Pancreas (tissue), 10 donors: ENCODE measurements at regions of chr12 and their contacts with region 1.

Region 1: DNA sequence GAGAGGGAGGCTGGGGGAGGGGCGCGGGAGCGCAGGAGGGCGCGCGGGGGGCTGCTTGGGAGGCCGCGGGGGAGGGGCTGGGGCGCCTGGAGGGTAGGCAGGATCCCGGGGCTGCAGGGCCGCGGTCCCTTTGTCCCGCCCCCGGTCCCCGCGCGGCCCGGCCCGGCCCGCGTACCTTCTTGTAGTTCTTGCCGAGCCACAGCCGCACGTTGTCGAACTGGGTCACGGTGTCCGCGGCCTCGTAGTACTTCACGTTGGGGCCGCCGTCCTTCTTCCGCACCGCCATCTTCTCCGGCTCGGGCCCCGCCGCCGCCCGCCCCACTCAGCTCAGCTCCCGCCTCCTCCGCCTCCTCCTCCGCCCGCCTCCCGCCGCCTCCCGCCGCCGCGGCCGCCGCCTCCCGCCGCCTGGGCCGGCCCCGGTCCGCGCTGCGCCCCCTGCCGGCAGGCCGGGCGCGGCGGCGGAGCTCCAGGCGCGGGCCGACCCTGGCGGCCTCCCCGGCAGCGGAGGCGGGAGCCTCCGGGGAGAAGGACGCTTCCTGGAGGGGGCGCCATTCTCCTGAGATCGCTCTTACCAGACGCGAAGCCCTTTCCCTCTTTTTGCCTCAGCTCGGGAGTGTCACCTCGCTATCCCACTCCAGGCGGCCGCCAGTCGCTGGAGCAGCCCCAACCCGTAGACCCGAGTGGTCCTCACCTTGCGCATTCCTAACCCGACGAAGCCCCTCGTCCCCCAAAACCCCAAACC is at the start of gene SMARCC2:
- DNase-seq: peak; percentile 87 to 95 (median 92)
- ATAC-seq: peak; percentile 82 to 93 (median 87)
- H3K4me3 ChIP-seq: peak within 1 kb of the TSS; percentile 69 to 91 (median 78)
- H3K27ac ChIP-seq: peak within 1 kb of the TSS; percentile 79 to 96 (median 90)
- H3K4me1 ChIP-seq: peaks cover 5 to 12% (median 10%) of the 10 kb centered on the region in 3 donors
- H3K27me3 ChIP-seq: no peaks in the 10 kb centered on the region
- CTCF ChIP-seq: peak; percentile 37 to 62 (median 58)
- total RNA-seq, gene SMARCC2: 26.3 to 64.5 (median 38.2) TPM

Region 2: DNA sequence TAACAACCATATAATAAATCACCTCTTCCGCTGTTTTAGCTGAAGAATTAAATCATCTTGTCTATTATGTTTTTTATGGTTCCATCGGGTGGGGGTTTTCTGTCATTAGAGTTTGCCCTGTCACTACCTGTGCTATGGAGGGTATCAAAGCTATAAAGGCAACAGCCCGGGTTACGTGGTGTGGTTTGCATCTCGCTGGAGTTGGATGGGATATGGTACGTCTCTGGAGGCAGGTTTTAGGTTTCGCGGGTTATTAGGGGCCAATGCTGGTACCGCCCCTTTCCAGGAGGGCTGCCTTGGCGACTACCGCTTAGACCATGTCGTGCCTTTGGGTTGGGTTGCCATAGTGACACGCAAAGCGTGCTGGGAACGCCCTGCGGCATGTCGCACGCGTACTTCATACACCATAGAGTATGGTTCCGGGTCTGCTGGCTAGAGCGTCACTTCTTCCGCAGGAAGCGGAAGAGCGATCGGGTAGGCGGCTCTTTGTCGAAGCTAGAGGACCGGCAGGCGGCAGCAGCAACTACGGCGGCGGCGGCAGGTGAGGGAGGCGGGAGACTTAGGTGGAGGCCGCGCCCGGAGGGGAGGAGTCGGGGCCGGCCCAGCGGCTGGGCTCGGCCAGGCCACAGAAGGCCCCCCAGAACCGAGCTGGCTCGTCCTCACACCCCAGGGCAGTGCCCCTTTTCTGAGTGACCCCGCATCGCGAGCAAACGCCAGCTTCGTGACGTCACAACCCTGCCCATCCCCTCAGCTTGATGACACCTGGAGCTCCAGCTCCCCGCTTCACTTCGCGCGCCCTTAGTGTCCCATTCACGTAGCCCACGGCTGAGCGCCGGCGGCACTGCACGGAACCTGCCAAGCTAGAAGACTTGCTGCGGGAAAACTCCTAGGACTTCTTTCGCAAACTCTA is 71.3 kb before region 1 on chr12 and contains the start of gene ZC3H10:
- intact Hi-C with region 1: loop called in 1 of 3 experiments (anchors 5 kb)
- DNase-seq: peak; percentile 89 to 99 (median 98)
- ATAC-seq: peak; percentile 78 to 88 (median 82)
- H3K4me3 ChIP-seq: peak within 1 kb of the TSS; percentile 45 to 84 (median 66)
- H3K27ac ChIP-seq: peak within 1 kb of the TSS; percentile 80 to 94 (median 87)
- H3K4me1 ChIP-seq: peaks cover 0 to 17% (median 13%) of the 10 kb centered on the region in 3 donors
- H3K27me3 ChIP-seq: no peaks in the 10 kb centered on the region
- CTCF ChIP-seq: peak in 2 of 4 donors; percentile 22 to 30
- total RNA-seq, gene ZC3H10: 2.6 to 4.1 (median 3.2) TPM

Region 3: GRCh38 chr12:56127888-56128669 is 61.3 kb before region 1 on chr12 and contains the start of gene ESYT1:
- intact Hi-C with region 1: loop called in 2 of 3 experiments (anchors 2 to 5 kb)
- DNase-seq: peak; percentile 92 to 99 (median 99)
- ATAC-seq: peak; percentile 86 to 92 (median 89)
- H3K4me3 ChIP-seq: peak within 1 kb of the TSS; percentile 64 to 82 (median 76)
- H3K27ac ChIP-seq: peak within 1 kb of the TSS; percentile 67 to 91 (median 80)
- H3K4me1 ChIP-seq: peaks cover 10 to 27% (median 12%) of the 10 kb centered on the region in 3 donors
- H3K27me3 ChIP-seq: no peaks in the 10 kb centered on the region
- CTCF ChIP-seq: no peak
- total RNA-seq, gene ESYT1: 42.8 to 55.1 (median 46.5) TPM

Region 4: DNA sequence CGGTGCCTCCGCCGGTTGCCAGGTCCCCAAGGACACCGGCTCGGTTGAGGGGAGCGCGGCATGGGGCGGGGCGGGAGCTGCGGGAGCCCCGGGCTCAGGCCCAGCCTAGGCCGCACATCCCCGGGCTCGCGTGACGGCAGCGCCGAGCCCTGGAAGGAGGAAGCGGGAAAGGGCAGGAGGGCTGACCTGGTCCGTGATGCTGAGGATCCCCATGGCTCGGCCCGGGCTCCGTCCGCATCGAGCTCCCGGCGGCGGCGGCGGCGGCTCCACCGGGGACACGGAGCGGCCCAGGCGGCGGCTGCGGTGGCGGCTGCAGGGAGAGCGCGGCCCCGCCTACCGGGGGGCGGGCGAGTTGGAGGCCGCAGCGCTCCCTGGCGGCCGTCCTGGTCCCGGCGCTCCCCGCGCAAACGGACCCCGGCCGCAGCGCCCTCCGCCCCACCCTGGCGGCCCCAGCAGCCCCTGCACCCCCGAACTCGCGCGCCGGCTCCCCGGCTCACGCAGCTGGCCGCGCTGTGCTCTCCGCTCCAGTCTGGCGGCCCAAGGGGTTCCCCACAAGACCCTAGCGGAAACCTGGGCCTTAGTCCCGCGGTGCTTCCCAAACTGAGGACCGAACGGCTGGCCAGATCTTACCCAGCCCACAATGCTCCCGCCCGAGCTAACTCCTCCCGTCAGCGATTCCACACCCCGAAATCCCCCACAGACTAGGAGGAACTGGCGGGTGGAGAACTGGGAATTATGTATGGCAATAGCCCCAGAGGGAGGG is 68.9 kb after region 1 on chr12 and contains the start of gene ANKRD52:
- intact Hi-C with region 1: loop called in 1 of 3 experiments (anchors 10 kb)
- DNase-seq: peak; percentile 61 to 92 (median 77)
- ATAC-seq: peak; percentile 97 to 99 (median 97)
- H3K4me3 ChIP-seq: peak within 1 kb of the TSS; percentile 74 to 94 (median 92)
- H3K27ac ChIP-seq: peak within 1 kb of the TSS; percentile 65 to 89 (median 83)
- H3K4me1 ChIP-seq: peaks cover 0 to 19% (median 0%) of the 10 kb centered on the region in 3 donors
- H3K27me3 ChIP-seq: no peaks in the 10 kb centered on the region
- CTCF ChIP-seq: peak; percentile 51 to 82 (median 65)
- total RNA-seq, gene ANKRD52: 12.1 to 25.1 (median 17.9) TPM

Region 5: DNA sequence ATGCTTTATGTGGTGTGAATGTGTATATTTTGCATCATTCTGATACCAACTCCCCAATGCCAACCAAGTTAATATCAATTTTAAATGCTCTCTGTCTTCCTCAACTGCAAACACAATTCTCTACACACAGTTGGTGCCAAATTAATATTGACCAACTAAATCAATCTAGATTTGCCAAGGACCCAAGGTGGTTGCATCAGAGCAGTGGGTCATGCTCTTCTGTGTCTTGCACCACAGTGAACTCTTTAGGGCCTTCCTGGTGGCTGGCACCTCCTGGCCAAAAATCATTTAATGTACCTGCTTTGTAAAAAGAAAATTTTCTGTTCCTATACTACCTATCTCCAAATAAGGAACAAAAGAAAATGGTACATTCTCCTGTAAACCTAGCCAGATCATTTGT is 91.5 kb after region 1 on chr12:
- intact Hi-C with region 1: no loop called
- DNase-seq: peak in 1 of 6 donors; percentile 30
- ATAC-seq: peak in 3 of 4 donors; percentile 42 to 46 (median 45)
- H3K4me3 ChIP-seq: no peak overlapping the region
- H3K27ac ChIP-seq: no peak overlapping the region
- H3K4me1 ChIP-seq: peaks cover 0 to 3% (median 0%) of the 10 kb centered on the region in 3 donors
- H3K27me3 ChIP-seq: no peaks in the 10 kb centered on the region
- CTCF ChIP-seq: no peak

Region 6: GRCh38 chr12:56878010-56878339 is 688.6 kb after region 1 on chr12:
- intact Hi-C with region 1: no loop called
- DNase-seq: no peak
- ATAC-seq: peak in 1 of 4 donors; percentile 61
- H3K4me3 ChIP-seq: no peak overlapping the region
- H3K27ac ChIP-seq: no peak overlapping the region
- H3K4me1 ChIP-seq: no peaks in the 10 kb centered on the region
- H3K27me3 ChIP-seq: no peaks in the 10 kb centered on the region
- CTCF ChIP-seq: no peak